ENCODE measurements at regions of chr2 and their contacts with region 1.

Region 1: DNA sequence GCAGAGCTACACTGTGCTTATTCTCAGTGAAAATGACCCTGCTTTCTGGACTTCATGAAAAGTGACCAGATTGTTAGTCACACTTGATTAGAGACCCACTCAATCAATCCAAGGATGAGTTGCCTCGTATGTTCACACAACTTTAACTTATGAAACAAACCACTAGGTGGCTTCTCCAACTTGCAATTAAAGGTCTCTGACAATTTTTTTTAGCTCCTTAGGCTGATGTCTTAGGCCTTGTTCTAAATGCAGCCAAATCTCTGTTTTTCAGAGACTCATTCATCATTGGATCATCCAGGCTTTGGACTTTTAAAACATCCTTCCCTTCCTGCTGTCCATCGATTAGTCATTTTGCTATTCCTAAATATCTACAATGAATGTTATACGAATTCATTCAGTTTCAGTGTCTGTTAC is 63.4 kb downstream of the MREG start:
- DNase-seq: peak in 1 of 2 experiments; percentile 30
- H3K4me3 ChIP-seq: no peak overlapping the region
- H3K4me3 Mint-ChIP-seq: no peak overlapping the region
- H3K27ac Mint-ChIP-seq: no peak overlapping the region
- H3K4me1 ChIP-seq: no peaks in the 10 kb centered on the region
- H3K4me1 Mint-ChIP-seq: peaks cover 15% of the 10 kb centered on the region
- H3K27me3 ChIP-seq: no peaks in the 10 kb centered on the region
- H3K27me3 Mint-ChIP-seq: no peaks in the 10 kb centered on the region
- CTCF ChIP-seq: peak; percentile 56 to 65

Region 2: GRCh38 chr2:215937190-215937589 is 12.8 kb before region 1 on chr2:
- CTCF ChIA-PET with region 1: no interaction called
- POLR2A ChIA-PET with region 1: no interaction called
- intact Hi-C with region 1: no loop called
- DNase-seq: no peak
- H3K4me3 ChIP-seq: no peak overlapping the region
- H3K4me3 Mint-ChIP-seq: no peak overlapping the region
- H3K27ac Mint-ChIP-seq: no peak overlapping the region
- H3K4me1 ChIP-seq: no peaks in the 10 kb centered on the region
- H3K4me1 Mint-ChIP-seq: no peaks in the 10 kb centered on the region
- H3K27me3 ChIP-seq: no peaks in the 10 kb centered on the region
- H3K27me3 Mint-ChIP-seq: no peaks in the 10 kb centered on the region
- CTCF ChIP-seq: no peak

Region 3: DNA sequence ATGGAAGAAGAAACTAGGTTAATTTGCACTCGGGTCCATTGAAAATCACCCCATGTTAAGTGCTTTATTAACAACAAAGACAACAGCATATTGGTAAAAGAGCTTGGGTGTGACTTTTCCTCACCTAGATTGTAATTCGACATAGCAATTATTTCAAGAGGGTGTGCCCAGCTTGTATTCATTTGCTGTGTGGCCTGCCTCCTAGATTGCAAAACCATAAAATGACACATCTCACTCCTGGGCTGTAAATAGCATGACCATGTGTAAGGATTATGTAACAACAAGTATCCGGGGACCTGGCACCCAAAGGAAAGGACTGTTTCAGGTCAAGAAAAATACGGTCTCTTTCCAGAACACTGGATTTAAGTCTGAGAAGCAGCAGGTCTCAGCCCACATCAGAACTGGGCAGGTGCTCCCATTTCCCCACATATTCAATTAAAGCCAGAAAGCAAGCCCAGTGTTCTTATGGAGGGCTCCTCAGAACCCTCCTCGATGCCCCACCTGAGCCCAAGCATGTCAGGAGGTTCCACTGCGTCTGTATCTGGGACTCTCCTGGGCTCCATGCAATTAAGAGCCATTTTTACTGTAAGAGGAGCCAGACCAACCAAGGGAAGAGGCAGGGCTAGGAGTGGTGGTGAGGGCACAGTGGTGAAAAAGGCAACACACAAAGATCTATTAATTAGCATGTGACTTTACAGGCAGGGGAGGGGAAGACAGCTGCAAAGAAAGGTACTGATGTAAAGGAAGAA is 24.1 kb after region 1 on chr2:
- CTCF ChIA-PET with region 1: no interaction called
- POLR2A ChIA-PET with region 1: no interaction called
- intact Hi-C with region 1: loop called (anchors 2 kb)
- DNase-seq: peak in 1 of 2 experiments; percentile 27
- H3K4me3 ChIP-seq: no peak overlapping the region
- H3K4me3 Mint-ChIP-seq: no peak overlapping the region
- H3K27ac Mint-ChIP-seq: no peak overlapping the region
- H3K4me1 ChIP-seq: no peaks in the 10 kb centered on the region; the same call in 1 of the 2 replicates
- H3K4me1 Mint-ChIP-seq: peaks cover 14% of the 10 kb centered on the region
- H3K27me3 ChIP-seq: no peaks in the 10 kb centered on the region
- H3K27me3 Mint-ChIP-seq: no peaks in the 10 kb centered on the region
- CTCF ChIP-seq: no peak

Region 4: GRCh38 chr2:216013080-216013909 is 63.3 kb after region 1 on chr2 and contains the start of gene MREG:
- CTCF ChIA-PET with region 1: interaction called, 6 read pairs
- POLR2A ChIA-PET with region 1: no interaction called
- intact Hi-C with region 1: loop called (anchors 1 kb)
- DNase-seq: peak; percentile 87 to 91
- H3K4me3 ChIP-seq: peak within 1 kb of the TSS; percentile 97
- H3K4me3 Mint-ChIP-seq: peak within 1 kb of the TSS; percentile 84
- H3K27ac Mint-ChIP-seq: peak within 1 kb of the TSS; percentile 88
- H3K4me1 ChIP-seq: peaks cover 8% of the 10 kb centered on the region
- H3K4me1 Mint-ChIP-seq: peaks cover 26% of the 10 kb centered on the region
- H3K27me3 ChIP-seq: no peaks in the 10 kb centered on the region
- H3K27me3 Mint-ChIP-seq: no peaks in the 10 kb centered on the region
- CTCF ChIP-seq: peak; percentile 70 to 93
- total RNA-seq, gene MREG: 41.7 and 43.8 TPM in 2 replicates

Region 5: DNA sequence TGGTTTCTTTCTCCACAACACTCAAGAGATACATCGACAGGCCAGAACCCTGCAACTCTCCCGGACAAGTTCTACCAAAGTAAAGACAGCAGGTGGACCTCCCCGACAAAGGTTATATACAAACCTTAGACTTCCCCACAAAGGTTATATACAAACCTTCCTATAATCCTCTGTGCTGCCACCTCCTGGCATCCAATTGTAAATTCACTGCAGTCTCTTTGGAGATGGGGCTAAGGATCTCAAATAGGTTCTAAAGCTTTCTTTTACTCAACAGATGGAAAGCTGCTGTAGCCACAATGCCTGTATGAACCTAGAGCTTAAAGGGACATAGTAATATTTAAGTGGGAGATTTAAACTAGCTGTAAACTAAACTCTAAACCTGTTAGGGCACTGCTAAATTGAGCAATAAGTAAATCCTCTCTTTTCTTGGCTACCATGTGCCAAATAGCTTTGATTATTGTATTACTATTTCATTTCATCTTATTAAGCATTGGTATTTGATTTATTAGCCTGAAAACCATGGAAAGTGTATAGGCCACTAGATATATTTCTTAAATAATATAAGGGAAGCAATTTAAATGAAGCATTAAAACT is 73.2 kb after region 1 on chr2:
- CTCF ChIA-PET with region 1: interaction called, 14 read pairs
- POLR2A ChIA-PET with region 1: no interaction called
- intact Hi-C with region 1: loop called (anchors 1 kb)
- DNase-seq: peak; percentile 63 to 68
- H3K4me3 ChIP-seq: no peak overlapping the region
- H3K4me3 Mint-ChIP-seq: no peak overlapping the region
- H3K27ac Mint-ChIP-seq: no peak overlapping the region
- H3K4me1 ChIP-seq: peaks cover 8% of the 10 kb centered on the region; the same call in 1 of the 2 replicates
- H3K4me1 Mint-ChIP-seq: no peaks in the 10 kb centered on the region
- H3K27me3 ChIP-seq: no peaks in the 10 kb centered on the region
- H3K27me3 Mint-ChIP-seq: no peaks in the 10 kb centered on the region
- CTCF ChIP-seq: peak; percentile 57 to 75